ENCODE measurements at regions of chr14 and their contacts with region 1.

Region 1: GRCh38 chr14:94129111-94129757 is at the start of gene IFI27L2:
- DNase-seq: peak; percentile 86
- H3K4me3 Mint-ChIP-seq: peak within 1 kb of the TSS; percentile 85
- H3K27ac Mint-ChIP-seq: peak within 1 kb of the TSS; percentile 88
- H3K4me1 Mint-ChIP-seq: peaks cover 24% of the 10 kb centered on the region
- H3K27me3 Mint-ChIP-seq: peaks cover 11% of the 10 kb centered on the region

Region 2: GRCh38 chr14:93764211-93764659 is 365.0 kb before region 1 on chr14:
- CTCF ChIA-PET with region 1: no interaction called
- DNase-seq: no peak
- H3K4me3 Mint-ChIP-seq: no peak overlapping the region
- H3K27ac Mint-ChIP-seq: no peak overlapping the region
- H3K4me1 Mint-ChIP-seq: no peaks in the 10 kb centered on the region
- H3K27me3 Mint-ChIP-seq: peaks cover 30% of the 10 kb centered on the region

Region 3: GRCh38 chr14:93994919-93995682 is 134.1 kb before region 1 on chr14:
- CTCF ChIA-PET with region 1: no interaction called
- DNase-seq: no peak
- H3K4me3 Mint-ChIP-seq: no peak overlapping the region
- H3K27ac Mint-ChIP-seq: no peak overlapping the region
- H3K4me1 Mint-ChIP-seq: peaks cover 25% of the 10 kb centered on the region
- H3K27me3 Mint-ChIP-seq: peaks cover 37% of the 10 kb centered on the region

Region 4: GRCh38 chr14:94051115-94051514 is 78.1 kb before region 1 on chr14:
- CTCF ChIA-PET with region 1: interaction called, 12 read pairs
- DNase-seq: no peak
- H3K4me3 Mint-ChIP-seq: no peak overlapping the region
- H3K27ac Mint-ChIP-seq: peak overlapping the region; percentile 25
- H3K4me1 Mint-ChIP-seq: peaks cover 32% of the 10 kb centered on the region
- H3K27me3 Mint-ChIP-seq: no peaks in the 10 kb centered on the region

Region 5: DNA sequence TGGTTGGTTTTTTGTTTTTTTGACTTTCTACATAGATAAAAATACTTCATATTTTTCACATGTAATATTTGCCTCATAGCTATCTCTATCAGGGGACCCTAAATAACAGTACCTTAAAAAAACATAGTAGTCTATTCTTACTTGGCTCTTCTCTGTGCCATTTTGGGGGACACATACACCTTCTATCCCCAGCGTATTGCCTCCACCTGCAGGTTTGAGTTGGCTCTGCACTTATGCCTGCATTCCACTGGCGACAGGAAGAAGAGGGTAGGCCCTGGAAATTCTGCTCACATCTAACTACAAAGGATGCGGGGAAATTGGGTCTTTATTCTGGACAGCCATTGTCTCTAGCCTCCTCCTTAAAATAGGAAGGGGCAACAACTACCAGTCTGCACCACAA is 14.0 kb after region 1 on chr14:
- CTCF ChIA-PET with region 1: interaction called, 28 read pairs
- DNase-seq: peak; percentile 40
- H3K4me3 Mint-ChIP-seq: no peak overlapping the region
- H3K27ac Mint-ChIP-seq: no peak overlapping the region
- H3K4me1 Mint-ChIP-seq: peaks cover 27% of the 10 kb centered on the region
- H3K27me3 Mint-ChIP-seq: peaks cover 14% of the 10 kb centered on the region

Region 6: GRCh38 chr14:94180655-94181271 is 51.5 kb after region 1 on chr14:
- CTCF ChIA-PET with region 1: interaction called, 34 read pairs
- DNase-seq: peak; percentile 41
- H3K4me3 Mint-ChIP-seq: peak overlapping the region; percentile 44
- H3K27ac Mint-ChIP-seq: peak overlapping the region; percentile 51
- H3K4me1 Mint-ChIP-seq: peaks cover 18% of the 10 kb centered on the region
- H3K27me3 Mint-ChIP-seq: peaks cover 16% of the 10 kb centered on the region

Measured in activated naive CD4-positive, alpha-beta T cell treated with anti-CD3 and anti-CD28 coated beads, Interleukin-2, amount 10 ng/mL, durations not matched to agents 7 days and 5 days (primary cell).